Activated CD4-positive, alpha-beta T cell treated with anti-CD3 and anti-CD28 coated beads, Interleukin-2, amount 10 ng/mL, durations not matched to agents 7 days and 5 days (primary cell): ENCODE measurements at regions of chr1 and their contacts with region 1.

Region 1: GRCh38 chr1:53945433-53946251 is at the start of gene IFT25:
- DNase-seq: peak; percentile 96
- H3K4me3 Mint-ChIP-seq: peak within 1 kb of the TSS; percentile 98
- H3K27ac Mint-ChIP-seq: peak within 1 kb of the TSS; percentile 97
- H3K4me1 Mint-ChIP-seq: peaks cover 52% of the 10 kb centered on the region
- H3K27me3 Mint-ChIP-seq: no peaks in the 10 kb centered on the region
- total RNA-seq, gene IFT25: 71.8 to 74.3 TPM

Region 2: GRCh38 chr1:53919675-53920066 is 26.0 kb before region 1 on chr1:
- CTCF ChIA-PET with region 1: interaction called, 13 read pairs
- POLR2A ChIA-PET with region 1: no interaction called
- DNase-seq: no peak
- H3K4me3 Mint-ChIP-seq: peak overlapping the region; percentile 43
- H3K27ac Mint-ChIP-seq: peak overlapping the region; percentile 84
- H3K4me1 Mint-ChIP-seq: peaks cover 37% of the 10 kb centered on the region
- H3K27me3 Mint-ChIP-seq: no peaks in the 10 kb centered on the region

Region 3: GRCh38 chr1:53959664-53960250 is 14.1 kb after region 1 on chr1:
- CTCF ChIA-PET with region 1: interaction called, 17 read pairs
- POLR2A ChIA-PET with region 1: no interaction called
- DNase-seq: peak; percentile 57
- H3K4me3 Mint-ChIP-seq: no peak overlapping the region
- H3K27ac Mint-ChIP-seq: no peak overlapping the region
- H3K4me1 Mint-ChIP-seq: peaks cover 24% of the 10 kb centered on the region
- H3K27me3 Mint-ChIP-seq: no peaks in the 10 kb centered on the region